Activated CD8-positive, alpha-beta memory T cell treated with anti-CD3 and anti-CD28 coated beads, Interleukin-2, amount 10 ng/mL, durations not matched to agents 7 days and 5 days (primary cell): ENCODE measurements at regions of chr1 and their contacts with region 1.

Region 1: GRCh38 chr1:206612129-206612876 is at the start of gene EIF2D:
- DNase-seq: peak; percentile 95
- ATAC-seq: peak; percentile 98
- H3K4me3 Mint-ChIP-seq: peak within 1 kb of the TSS; percentile 87
- H3K27ac Mint-ChIP-seq: peak within 1 kb of the TSS; percentile 93
- H3K4me1 Mint-ChIP-seq: peaks cover 40% of the 10 kb centered on the region
- H3K27me3 Mint-ChIP-seq: peaks cover 6% of the 10 kb centered on the region
- total RNA-seq, gene EIF2D: 51.7 to 68.4 TPM

Region 2: GRCh38 chr1:206461602-206462455 is 150.5 kb before region 1 on chr1:
- CTCF ChIA-PET with region 1: interaction called, 10 read pairs
- DNase-seq: peak; percentile 86
- ATAC-seq: peak; percentile 77
- H3K4me3 Mint-ChIP-seq: no peak overlapping the region
- H3K27ac Mint-ChIP-seq: no peak overlapping the region
- H3K4me1 Mint-ChIP-seq: peaks cover 45% of the 10 kb centered on the region
- H3K27me3 Mint-ChIP-seq: no peaks in the 10 kb centered on the region

Region 3: GRCh38 chr1:206479183-206480125 is 132.8 kb before region 1 on chr1:
- CTCF ChIA-PET with region 1: interaction called, 10 read pairs
- DNase-seq: peak; percentile 80
- ATAC-seq: peak; percentile 72
- H3K4me3 Mint-ChIP-seq: no peak overlapping the region
- H3K27ac Mint-ChIP-seq: peak overlapping the region; percentile 61
- H3K4me1 Mint-ChIP-seq: peaks cover 17% of the 10 kb centered on the region
- H3K27me3 Mint-ChIP-seq: no peaks in the 10 kb centered on the region

Region 4: DNA sequence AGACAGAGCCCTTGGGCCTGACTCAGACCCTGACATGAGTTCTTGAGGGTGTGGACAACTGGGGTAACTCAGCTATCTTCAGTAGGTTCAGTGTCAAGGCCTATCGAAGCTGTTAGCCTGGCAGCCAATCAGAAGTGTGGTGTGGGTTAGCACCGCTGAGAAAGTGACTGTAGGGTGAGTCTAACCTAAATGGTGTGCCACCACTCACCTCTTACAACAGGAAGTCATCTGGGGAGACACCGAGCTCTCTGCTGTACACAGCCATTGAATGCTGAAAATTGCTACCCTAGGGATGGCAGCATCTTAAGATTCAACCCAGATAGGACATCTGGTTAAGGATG is 60.3 kb before region 1 on chr1:
- CTCF ChIA-PET with region 1: interaction called, 15 read pairs
- DNase-seq: peak; percentile 93
- ATAC-seq: peak; percentile 84
- H3K4me3 Mint-ChIP-seq: peak overlapping the region; percentile 52
- H3K27ac Mint-ChIP-seq: peak overlapping the region; percentile 88
- H3K4me1 Mint-ChIP-seq: peaks cover 49% of the 10 kb centered on the region
- H3K27me3 Mint-ChIP-seq: no peaks in the 10 kb centered on the region

Region 5: DNA sequence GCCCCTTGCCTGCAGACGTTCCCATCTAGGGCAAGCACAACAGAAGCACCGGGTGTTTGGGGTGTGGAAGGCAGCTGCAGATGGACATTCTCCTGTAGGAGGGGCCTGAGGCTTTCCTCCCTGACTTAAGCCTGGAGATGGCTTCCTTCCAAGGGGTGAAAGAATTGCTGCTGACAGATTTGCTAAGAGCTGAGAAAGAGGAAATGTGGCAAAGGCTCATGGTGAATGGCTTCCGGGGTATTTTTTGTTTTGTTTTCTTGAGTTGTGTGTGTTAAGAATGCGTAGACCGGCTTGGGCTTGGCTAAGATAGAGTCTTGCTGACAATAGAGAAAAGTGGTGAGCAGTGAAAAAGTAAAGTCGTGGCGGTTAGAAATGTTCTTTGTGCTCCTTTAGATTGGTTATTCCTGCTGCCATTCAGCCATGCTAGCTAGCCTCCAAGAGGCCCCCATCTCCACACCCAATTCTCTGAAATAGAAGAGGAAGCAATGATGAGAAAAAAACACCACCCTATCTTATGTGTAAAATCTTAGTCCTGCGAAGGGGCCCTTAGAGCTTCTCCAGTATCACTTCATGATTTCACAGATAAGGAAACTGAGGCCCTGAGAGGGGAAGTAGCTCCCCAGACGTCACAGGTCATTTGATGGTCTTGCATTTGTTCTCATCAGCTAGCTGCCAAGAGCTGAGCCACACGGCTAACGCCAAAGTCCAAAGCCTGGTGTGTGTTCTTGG is 37.0 kb before region 1 on chr1:
- CTCF ChIA-PET with region 1: interaction called, 11 read pairs
- DNase-seq: peak; percentile 80
- ATAC-seq: peak; percentile 54
- H3K4me3 Mint-ChIP-seq: peak overlapping the region; percentile 70
- H3K27ac Mint-ChIP-seq: peak overlapping the region; percentile 95
- H3K4me1 Mint-ChIP-seq: peaks cover 96% of the 10 kb centered on the region
- H3K27me3 Mint-ChIP-seq: no peaks in the 10 kb centered on the region

Region 6: GRCh38 chr1:206600527-206600926 is 11.8 kb before region 1 on chr1:
- CTCF ChIA-PET with region 1: interaction called, 10 read pairs
- DNase-seq: no peak
- ATAC-seq: no peak
- H3K4me3 Mint-ChIP-seq: no peak overlapping the region
- H3K27ac Mint-ChIP-seq: no peak overlapping the region
- H3K4me1 Mint-ChIP-seq: peaks cover 1% of the 10 kb centered on the region
- H3K27me3 Mint-ChIP-seq: no peaks in the 10 kb centered on the region